Left cardiac atrium (tissue), 4 donors: ENCODE measurements at regions of chr7 and their contacts with region 1.

Region 1: GRCh38 chr7:150898475-150899011 is 46.2 kb downstream of the AOC1 start:
- DNase-seq: peak; percentile 87
- ATAC-seq: peak; percentile 76 to 77

Region 2: DNA sequence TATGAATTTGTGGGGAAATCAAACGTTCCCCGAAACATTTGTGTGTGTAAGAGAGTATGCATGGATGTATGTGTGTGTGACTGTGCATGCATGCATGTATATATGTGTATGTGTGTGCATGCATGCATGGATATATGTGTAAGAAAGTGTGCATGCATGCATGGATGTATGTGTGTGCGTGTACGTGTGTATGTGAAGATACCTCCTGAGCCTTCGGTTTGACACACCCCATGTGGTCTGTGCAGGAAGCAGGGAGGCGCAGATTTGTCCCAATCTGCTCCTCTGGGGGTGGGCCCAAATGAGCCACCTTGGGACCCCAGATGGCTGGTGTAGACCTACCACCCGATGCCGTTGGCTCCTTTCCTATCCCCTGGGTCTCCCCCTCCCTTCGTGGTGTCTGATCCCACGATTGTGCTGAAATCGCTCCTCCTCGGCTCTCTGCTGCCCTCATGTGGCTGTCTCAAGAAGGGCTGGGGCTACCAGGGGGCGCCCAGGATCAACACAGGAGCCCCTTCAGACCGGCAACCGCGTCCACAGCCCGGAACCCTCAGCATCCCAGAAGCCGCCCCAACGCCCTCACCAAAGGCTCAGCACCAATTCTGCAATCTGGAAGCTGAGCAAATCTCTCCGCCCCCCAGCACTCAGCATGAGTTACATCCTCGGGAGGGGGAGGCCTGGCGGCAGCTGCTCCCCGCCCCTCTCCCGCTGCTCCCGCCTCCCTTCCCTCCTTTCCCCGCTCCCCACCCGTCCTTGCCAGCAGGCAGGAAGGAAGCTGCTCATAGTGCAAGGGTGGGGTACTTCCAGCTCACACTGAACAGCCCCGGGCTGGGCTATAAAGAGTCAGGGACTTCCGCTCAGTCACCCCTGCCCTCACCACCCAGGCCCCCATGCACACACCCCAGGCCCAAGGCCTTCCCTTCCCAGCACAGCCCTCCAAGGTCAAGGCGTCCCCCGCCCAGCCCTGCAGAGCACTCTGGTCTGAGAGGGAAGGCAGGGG is 90.0 kb after region 1 on chr7:
- intact Hi-C with region 1: loop called (anchors 1 to 5 kb)
- DNase-seq: peak; percentile 86
- ATAC-seq: peak; percentile 56 to 60